ENCODE measurements at regions of chr2 and their contacts with region 1.

Region 1: DNA sequence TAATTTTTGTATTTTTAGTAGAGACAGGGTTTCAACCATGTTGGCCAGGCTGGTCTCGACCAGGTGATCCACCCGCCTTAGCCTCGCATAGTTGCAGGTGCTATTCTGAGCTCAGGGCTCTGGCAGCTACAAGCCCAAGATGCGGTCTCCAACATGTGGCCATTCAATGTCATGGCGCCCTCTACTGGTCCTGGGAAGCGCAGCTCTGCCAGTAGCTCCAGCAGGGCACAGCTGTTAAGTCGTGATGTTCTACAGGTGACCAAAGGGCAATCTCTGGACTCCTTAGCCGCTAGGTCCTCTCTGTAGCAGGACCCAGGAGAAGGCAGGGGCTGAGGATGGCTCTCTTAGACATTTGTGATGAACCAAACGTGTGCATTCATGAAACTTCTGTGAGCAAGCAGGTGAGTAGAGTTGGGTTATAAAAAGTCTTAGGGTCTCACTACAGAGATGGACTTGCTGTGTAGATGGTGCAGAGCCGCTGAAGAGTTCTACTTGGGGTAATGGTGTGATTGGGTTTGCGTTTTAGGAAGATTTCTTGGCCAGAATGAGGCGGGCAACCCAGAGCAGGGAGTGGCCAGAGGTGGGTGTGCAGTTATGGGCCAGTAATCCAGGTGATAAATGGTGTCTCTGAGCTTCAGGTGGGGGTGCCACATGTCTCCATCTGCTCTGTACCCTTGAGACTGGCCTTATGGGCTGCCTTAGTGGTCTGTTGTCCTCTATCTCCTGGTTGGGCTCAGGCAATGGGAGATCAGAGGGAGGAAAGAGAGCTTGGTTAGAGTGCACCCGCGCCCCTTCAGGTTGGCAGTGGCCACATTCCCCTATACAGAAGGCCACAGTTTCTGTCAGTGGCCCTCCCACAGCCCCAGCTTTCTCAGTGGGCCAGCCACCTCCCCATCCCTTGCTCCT is 31.0 kb downstream of the IL37 start:
- DNase-seq: peak; percentile 58 to 81
- ATAC-seq: peak; percentile 82 to 95 (median 91)
- H3K4me3 ChIP-seq: no peak overlapping the region
- H3K4me3 Mint-ChIP-seq: no peak overlapping the region
- H3K27ac ChIP-seq: no peak overlapping the region
- H3K27ac Mint-ChIP-seq: no peak overlapping the region
- H3K4me1 ChIP-seq: no peaks in the 10 kb centered on the region
- H3K4me1 Mint-ChIP-seq: peaks cover 6 to 7% of the 10 kb centered on the region in 2 donors
- H3K27me3 ChIP-seq: no peaks in the 10 kb centered on the region
- H3K27me3 Mint-ChIP-seq: peaks cover 3 to 9% of the 10 kb centered on the region in 2 donors
- CTCF ChIP-seq: peak; percentile 79

Region 2: DNA sequence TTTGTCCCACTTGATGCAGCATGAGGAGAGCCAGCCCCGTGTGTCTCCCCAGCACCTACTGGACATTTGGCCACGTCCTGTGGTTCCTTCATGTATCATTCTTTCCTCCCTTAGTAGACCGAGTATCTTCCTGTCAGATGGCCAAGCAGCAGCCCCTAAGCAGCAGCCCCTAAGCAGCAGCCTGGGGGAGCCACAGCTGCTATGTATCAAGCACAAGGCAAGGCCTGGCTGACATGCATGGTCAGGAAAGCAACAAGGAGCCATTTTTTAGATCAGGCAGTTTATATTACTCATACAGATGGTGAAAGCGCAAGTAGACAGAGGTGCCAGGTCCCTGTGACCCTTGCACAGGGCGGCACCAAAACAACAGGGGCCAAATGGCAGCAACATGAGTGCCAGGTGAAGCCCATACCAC is 335.5 kb before region 1 on chr2:
- intact Hi-C with region 1: loop called (anchors 10 kb)
- DNase-seq: no peak
- ATAC-seq: no peak
- H3K4me3 ChIP-seq: no peak overlapping the region
- H3K4me3 Mint-ChIP-seq: no peak overlapping the region
- H3K27ac ChIP-seq: no peak overlapping the region
- H3K27ac Mint-ChIP-seq: peak overlapping the region in 1 of 2 donors; percentile 12
- H3K4me1 ChIP-seq: peaks cover 3% of the 10 kb centered on the region
- H3K4me1 Mint-ChIP-seq: peaks cover 11 to 17% of the 10 kb centered on the region in 2 donors
- H3K27me3 ChIP-seq: no peaks in the 10 kb centered on the region
- H3K27me3 Mint-ChIP-seq: no peaks in the 10 kb centered on the region
- CTCF ChIP-seq: no peak

Measured in natural killer cell (primary cell).